GM10248 (cell line): ENCODE measurements at regions of chr4 and their contacts with region 1.

Region 1: DNA sequence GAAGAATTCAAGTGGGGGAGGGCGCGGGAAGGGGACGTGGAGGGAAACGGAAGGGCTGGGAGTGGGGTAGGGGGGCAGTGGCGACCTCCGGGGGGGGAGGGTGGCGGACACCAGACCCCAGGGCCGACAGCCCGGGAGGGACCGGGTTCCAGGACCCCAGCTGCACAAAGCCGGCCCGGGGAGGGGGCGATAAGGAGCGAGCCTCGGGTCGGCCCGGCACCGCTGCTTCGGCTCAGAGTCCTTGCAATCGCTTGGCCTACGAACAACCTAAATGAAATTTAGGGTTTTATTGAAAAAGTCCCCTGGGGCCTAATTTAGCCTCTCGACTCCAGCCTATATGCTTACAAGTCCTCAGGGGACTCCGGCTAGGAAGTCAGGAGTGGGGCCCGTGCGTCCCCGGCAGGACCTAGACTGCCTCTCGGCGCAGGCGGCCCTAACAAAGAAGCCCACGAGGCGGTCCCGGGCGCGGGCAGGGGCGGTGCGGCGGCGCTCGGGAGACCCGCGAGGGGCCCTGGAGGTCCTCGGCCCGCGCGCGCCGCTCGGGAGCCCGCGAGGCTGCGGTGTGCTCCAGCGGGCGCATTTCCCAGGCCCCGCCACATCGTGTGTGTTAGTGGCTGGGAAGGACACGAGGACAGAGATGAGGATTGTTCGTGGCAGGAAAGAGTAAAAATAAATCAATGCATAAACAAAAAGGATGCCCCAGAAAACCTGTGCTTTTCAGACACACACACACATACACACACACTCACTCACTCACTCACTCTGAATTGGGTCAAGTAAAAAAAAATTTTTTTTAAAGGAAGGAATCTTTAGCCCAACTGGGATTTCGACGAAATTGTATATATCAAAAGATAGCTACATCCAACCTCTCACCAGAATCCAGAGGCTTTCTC is 70.0 kb downstream of the MGST2 start:
- DNase-seq: no peak
- CTCF ChIP-seq: no peak

Region 2: DNA sequence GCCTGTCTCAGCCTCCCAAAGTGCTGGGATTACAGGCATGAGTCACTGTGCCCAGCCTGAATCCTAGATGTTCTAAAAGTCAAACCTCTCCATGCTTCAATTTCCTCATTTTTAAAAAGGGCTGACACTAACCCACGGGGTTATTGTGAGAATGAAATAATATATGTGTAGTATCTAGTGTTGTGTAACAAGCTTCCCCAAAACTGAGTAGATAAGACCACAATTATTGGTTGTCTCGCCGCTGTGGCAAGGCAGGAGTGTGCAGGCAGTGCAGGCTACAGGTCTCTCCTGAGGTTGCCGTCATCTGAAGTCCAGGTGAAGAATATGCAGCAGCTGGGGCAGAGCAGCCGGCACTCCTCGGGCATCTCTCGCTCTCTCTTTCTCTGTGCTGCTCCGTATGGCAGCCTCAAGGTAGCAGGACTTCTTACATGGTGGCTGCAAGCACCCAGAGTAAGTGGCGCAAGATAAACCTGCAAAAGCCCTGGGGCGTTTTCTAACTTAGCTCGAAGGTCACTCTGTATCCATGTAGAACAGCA is 250.8 kb before region 1 on chr4:
- CTCF ChIA-PET with region 1: no interaction called
- POLR2A ChIA-PET with region 1: no interaction called
- DNase-seq: no peak
- CTCF ChIP-seq: no peak

Region 3: DNA sequence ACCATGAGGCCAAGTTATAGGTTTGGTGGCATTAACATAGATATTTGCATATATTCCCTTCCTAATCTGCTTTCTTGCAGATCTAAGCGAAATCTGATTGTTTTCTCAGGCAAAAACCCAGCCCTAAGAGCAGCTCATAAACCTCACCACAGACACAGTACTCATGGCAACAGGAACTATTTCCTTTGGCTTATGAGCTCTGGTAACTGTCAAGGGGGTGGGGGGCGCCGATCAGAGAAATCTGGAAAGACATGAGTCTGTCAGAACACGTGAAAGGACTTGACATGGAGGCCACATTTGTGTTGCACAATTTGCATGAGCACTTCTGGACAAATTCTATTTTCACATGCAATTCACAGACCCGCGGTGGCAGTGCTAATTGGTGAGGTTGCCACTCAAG is 13.7 kb after region 1 on chr4:
- CTCF ChIA-PET with region 1: interaction called, 10 read pairs
- POLR2A ChIA-PET with region 1: no interaction called
- DNase-seq: no peak
- CTCF ChIP-seq: no peak